CD14-positive monocyte (primary cell): ENCODE measurements at regions of chr13 and their contacts with region 1.

Region 1: GRCh38 chr13:25286969-25287961 is at the start of gene MTMR6:
- DNase-seq: peak; percentile 86 to 95 (median 89)
- H3K4me3 ChIP-seq: peak within 1 kb of the TSS; percentile 72 to 98 (median 93)
- H3K4me3 Mint-ChIP-seq: peak within 1 kb of the TSS; percentile 94 to 95
- H3K27ac ChIP-seq: peak within 1 kb of the TSS; percentile 94 to 100
- H3K27ac Mint-ChIP-seq: peak within 1 kb of the TSS; percentile 97 to 99 (median 99)
- H3K4me1 ChIP-seq: peaks cover 17 to 26% of the 10 kb centered on the region in 2 donors
- H3K4me1 Mint-ChIP-seq: peaks cover 44% of the 10 kb centered on the region
- H3K27me3 ChIP-seq: no peaks in the 10 kb centered on the region
- H3K27me3 Mint-ChIP-seq: peaks cover 2 to 4% (median 2%) of the 10 kb centered on the region in 3 donors
- CTCF ChIP-seq: peak; percentile 100
- polyA plus RNA-seq, gene MTMR6: 7.4 to 31.9 (median 24.4) TPM

Region 2: GRCh38 chr13:25232937-25233515 is 54.2 kb before region 1 on chr13:
- intact Hi-C with region 1: loop called in 1 of 2 experiments (anchors 10 kb)
- DNase-seq: peak; percentile 29 to 63 (median 44)
- H3K4me3 ChIP-seq: no peak overlapping the region
- H3K4me3 Mint-ChIP-seq: no peak overlapping the region
- H3K27ac ChIP-seq: no peak overlapping the region
- H3K27ac Mint-ChIP-seq: no peak overlapping the region
- H3K4me1 ChIP-seq: peaks cover 0 to 3% of the 10 kb centered on the region in 2 donors
- H3K4me1 Mint-ChIP-seq: peaks cover 14% of the 10 kb centered on the region
- H3K27me3 ChIP-seq: peaks cover 0 to 14% of the 10 kb centered on the region in 2 donors
- H3K27me3 Mint-ChIP-seq: peaks cover 8 to 17% (median 14%) of the 10 kb centered on the region in 3 donors
- CTCF ChIP-seq: peak; percentile 82

Region 3: DNA sequence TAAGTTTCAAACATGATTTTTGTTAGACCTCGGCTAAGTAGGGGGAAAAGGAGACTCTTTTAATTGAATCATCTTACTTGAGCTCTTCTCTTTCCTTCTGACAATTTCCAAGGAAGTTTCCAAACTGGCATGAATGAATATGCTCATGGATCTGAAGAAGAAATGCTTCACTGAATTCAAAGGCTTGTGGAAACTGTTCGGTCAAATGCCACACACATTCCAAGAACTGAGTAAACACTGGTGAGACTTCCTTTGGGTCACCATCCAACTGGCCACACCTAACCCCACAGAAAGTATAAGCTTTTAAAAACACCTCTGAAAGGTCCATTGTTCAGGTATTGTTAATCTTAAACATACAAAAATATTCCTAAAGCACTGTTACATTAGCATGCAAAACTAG is 33.6 kb before region 1 on chr13:
- intact Hi-C with region 1: loop called in 1 of 2 experiments (anchors 5 kb)
- DNase-seq: no peak
- H3K4me3 ChIP-seq: no peak overlapping the region
- H3K4me3 Mint-ChIP-seq: no peak overlapping the region
- H3K27ac ChIP-seq: no peak overlapping the region
- H3K27ac Mint-ChIP-seq: peak overlapping the region in 3 of 7 donors; percentile 38 to 78 (median 51)
- H3K4me1 ChIP-seq: peaks cover 11 to 16% of the 10 kb centered on the region in 2 donors
- H3K4me1 Mint-ChIP-seq: peaks cover 23% of the 10 kb centered on the region
- H3K27me3 ChIP-seq: no peaks in the 10 kb centered on the region
- H3K27me3 Mint-ChIP-seq: no peaks in the 10 kb centered on the region
- CTCF ChIP-seq: no peak